ENCODE measurements at regions of chr6 and their contacts with region 1.

Region 1: DNA sequence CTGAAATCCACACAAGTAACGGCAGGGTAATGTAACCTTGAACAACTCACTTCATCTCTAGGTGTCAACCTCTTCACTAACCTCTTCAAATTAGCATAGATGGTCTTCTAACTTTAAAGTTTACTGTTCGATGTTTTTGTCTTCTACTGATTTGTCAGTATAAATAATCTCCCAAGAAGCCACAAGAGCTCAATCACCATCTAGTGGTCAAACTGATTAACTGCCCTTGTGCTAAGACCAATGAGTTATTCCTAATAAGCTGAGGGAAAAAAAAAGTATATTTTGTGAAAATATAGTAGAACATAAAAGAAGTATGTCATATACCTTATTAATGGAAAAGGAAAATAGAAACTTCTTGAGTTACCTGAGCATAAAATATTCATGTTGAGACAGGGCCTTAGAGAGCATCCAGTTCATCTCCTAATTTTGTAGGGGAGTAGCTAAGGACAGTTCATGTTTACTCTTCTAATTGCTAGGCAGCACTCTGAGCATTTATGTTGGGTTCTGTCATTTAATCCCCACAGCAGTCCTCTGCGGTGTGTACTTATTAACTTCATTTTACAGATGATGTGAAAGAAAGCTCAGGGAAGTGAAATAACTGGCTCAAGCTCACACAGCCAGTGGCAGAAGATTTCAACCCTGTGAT is 317.1 kb downstream of the ESR1 start:
- DNase-seq: peak; percentile 49
- H3K4me3 ChIP-seq: no peak overlapping the region
- H3K27ac ChIP-seq: no peak overlapping the region
- H3K4me1 ChIP-seq: peaks cover 23% of the 10 kb centered on the region
- H3K27me3 ChIP-seq: no peaks in the 10 kb centered on the region
- CTCF ChIP-seq: peak; percentile 85 to 88

Region 2: DNA sequence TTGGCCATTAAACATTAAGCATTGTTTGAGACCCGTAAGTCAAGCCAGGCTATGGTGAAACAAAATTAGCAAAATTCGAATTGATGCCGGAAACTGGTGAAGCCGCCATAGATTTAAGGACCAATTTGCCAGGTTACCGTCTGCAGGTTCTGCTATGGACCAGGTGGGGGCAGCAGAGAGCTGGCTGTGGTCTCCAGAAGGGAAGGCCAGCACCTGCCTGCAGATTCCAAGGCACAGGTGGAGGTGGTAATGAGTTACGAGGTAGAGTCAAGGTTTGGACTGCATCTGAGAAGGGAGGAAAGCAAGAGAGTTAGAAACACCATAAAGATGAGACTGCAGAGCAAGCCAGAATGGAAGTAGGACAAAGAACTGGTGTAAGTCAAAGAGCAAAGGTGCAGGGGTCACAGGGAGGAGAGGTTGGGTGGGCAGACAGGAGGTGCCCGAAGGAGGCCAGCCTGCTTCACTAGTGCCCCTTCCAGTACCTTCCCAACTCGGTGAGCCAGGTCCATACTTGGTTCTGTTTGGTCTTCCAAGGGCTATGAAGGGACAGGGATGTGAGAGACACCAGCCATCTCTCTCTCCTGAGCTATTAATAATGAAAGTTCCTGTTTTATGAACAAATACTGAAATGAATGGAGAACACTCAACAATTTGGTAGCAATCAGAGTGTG is 448.7 kb before region 1 on chr6:
- CTCF ChIA-PET with region 1: no interaction called
- dilution Hi-C with region 1: no loop called
- in situ Hi-C with region 1: loop called in 1 of 2 experiments (anchors 10 kb)
- intact Hi-C with region 1: loop called (anchors 1 kb)
- DNase-seq: peak; percentile 38
- H3K4me3 ChIP-seq: no peak overlapping the region
- H3K27ac ChIP-seq: no peak overlapping the region
- H3K4me1 ChIP-seq: no peaks in the 10 kb centered on the region
- H3K27me3 ChIP-seq: no peaks in the 10 kb centered on the region
- CTCF ChIP-seq: peak; percentile 95 to 98

Region 3: GRCh38 chr6:151690768-151691562 is 433.6 kb before region 1 on chr6:
- CTCF ChIA-PET with region 1: no interaction called
- dilution Hi-C with region 1: no loop called
- in situ Hi-C with region 1: no loop called
- intact Hi-C with region 1: loop called (anchors 5 kb)
- DNase-seq: peak; percentile 39
- H3K4me3 ChIP-seq: peak overlapping the region; percentile 23 to 29 (median 29)
- H3K27ac ChIP-seq: peak overlapping the region; percentile 2
- H3K4me1 ChIP-seq: peaks cover 12% of the 10 kb centered on the region
- H3K27me3 ChIP-seq: no peaks in the 10 kb centered on the region
- CTCF ChIP-seq: no peak

Region 4: GRCh38 chr6:151958331-151958730 is 166.2 kb before region 1 on chr6:
- CTCF ChIA-PET with region 1: interaction called, 8 read pairs
- dilution Hi-C with region 1: no loop called
- in situ Hi-C with region 1: no loop called
- intact Hi-C with region 1: loop called (anchors 1 kb)
- DNase-seq: peak; percentile 80
- H3K4me3 ChIP-seq: no peak overlapping the region
- H3K27ac ChIP-seq: peak overlapping the region; percentile 28
- H3K4me1 ChIP-seq: peaks cover 26% of the 10 kb centered on the region
- H3K27me3 ChIP-seq: no peaks in the 10 kb centered on the region
- CTCF ChIP-seq: no peak

Region 5: GRCh38 chr6:152484806-152485205 is 360.3 kb after region 1 on chr6:
- CTCF ChIA-PET with region 1: no interaction called
- dilution Hi-C with region 1: no loop called
- in situ Hi-C with region 1: no loop called
- intact Hi-C with region 1: no loop called
- DNase-seq: no peak
- H3K4me3 ChIP-seq: no peak overlapping the region
- H3K27ac ChIP-seq: no peak overlapping the region
- H3K4me1 ChIP-seq: no peaks in the 10 kb centered on the region
- H3K27me3 ChIP-seq: no peaks in the 10 kb centered on the region
- CTCF ChIP-seq: no peak